A549 (cell line): ENCODE measurements at regions of chr14 and their contacts with region 1.

Region 1: GRCh38 chr14:68816262-68816942 is 23.5 kb upstream of the ZFP36L1 start:
- DNase-seq: peak; percentile 92 to 93
- ATAC-seq: peak; percentile 90 to 92
- H3K4me3 ChIP-seq: peak overlapping the region; percentile 45
- H3K27ac ChIP-seq: peak overlapping the region; percentile 97 to 100
- H3K4me1 ChIP-seq: peaks cover 47% of the 10 kb centered on the region
- CTCF ChIP-seq: peak; percentile 94
- EP300 ChIP-seq: 0 out of 5 replicates have a peak, but pooled peaks of 1 of the 2 experiments have one; percentile 1
- POLR2A ChIP-seq: peak; percentile 48
- RAD21 ChIP-seq: peak; percentile 98 to 99

Region 2: DNA sequence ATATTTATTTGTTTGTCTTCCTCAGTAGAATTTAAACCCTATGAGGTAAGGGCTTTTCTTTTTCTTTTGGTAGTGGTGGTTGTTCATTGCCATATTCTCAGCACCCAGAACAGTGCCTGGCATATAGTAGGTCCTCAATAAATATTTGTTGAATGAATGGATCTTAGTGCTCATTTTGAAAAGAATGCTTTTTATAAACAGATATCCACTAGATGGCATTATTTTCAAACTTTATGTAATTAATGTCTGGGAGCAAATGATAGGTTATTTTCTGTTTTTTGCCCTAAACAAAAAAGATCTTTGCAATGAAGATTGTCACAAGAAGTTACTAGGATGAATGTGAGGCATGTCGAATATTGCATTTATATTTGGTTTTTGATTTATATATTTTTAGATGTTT is 932.7 kb before region 1 on chr14:
- CTCF ChIA-PET with region 1: interaction called, 75 read pairs
- POLR2A ChIA-PET with region 1: no interaction called
- DNase-seq: peak; percentile 18
- ATAC-seq: no peak
- H3K4me3 ChIP-seq: no peak overlapping the region
- H3K27ac ChIP-seq: peak overlapping the region in 1 of 2 experiments; percentile 71; a peak in 2 of 6 replicates
- H3K4me1 ChIP-seq: peaks cover 12% of the 10 kb centered on the region; the same call in 1 of the 3 replicates
- CTCF ChIP-seq: peak; percentile 65
- EP300 ChIP-seq: no peak
- POLR2A ChIP-seq: no peak
- RAD21 ChIP-seq: peak; percentile 64 to 79

Region 3: DNA sequence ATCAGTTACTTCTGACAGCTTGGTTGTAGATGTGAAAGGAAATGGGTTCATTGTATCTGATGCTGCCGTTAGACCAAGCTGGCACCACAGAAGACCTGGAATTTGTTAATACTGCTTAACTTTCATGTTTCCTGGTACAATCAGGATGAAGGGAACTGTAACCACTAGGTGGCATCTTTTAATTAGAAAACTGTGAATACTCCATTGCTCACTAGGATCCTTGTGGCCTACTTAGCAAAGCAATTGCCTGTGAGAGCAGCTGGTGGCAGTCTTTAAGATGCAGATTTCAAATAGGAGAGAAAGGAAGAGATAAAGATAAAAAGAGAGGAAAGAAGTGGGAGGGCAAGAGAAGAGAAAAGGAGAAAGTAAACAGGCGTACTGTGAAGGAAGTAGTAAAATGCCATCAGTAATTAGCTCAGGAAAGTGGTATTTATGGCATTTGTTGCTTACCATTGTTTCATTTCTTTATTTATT is 882.4 kb before region 1 on chr14:
- CTCF ChIA-PET with region 1: interaction called, 51 read pairs
- POLR2A ChIA-PET with region 1: no interaction called
- DNase-seq: peak; percentile 82 to 89
- ATAC-seq: peak; percentile 99
- H3K4me3 ChIP-seq: no peak overlapping the region
- H3K27ac ChIP-seq: peak overlapping the region; percentile 73 to 78
- H3K4me1 ChIP-seq: peaks cover 13% of the 10 kb centered on the region
- CTCF ChIP-seq: peak; percentile 93
- EP300 ChIP-seq: no peak
- POLR2A ChIP-seq: no peak
- RAD21 ChIP-seq: peak; percentile 89 to 93

Region 4: GRCh38 chr14:68239988-68240771 is 576.2 kb before region 1 on chr14:
- CTCF ChIA-PET with region 1: interaction called, 162 read pairs
- POLR2A ChIA-PET with region 1: no interaction called
- DNase-seq: no peak
- ATAC-seq: no peak; a peak in 1 of 6 replicates
- H3K4me3 ChIP-seq: no peak overlapping the region
- H3K27ac ChIP-seq: peak overlapping the region; percentile 46 to 76
- H3K4me1 ChIP-seq: peaks cover 19% of the 10 kb centered on the region
- CTCF ChIP-seq: no peak
- EP300 ChIP-seq: no peak
- POLR2A ChIP-seq: no peak
- RAD21 ChIP-seq: no peak

Region 5: GRCh38 chr14:68685419-68686204 is 130.8 kb before region 1 on chr14:
- CTCF ChIA-PET with region 1: interaction called, 10 read pairs
- POLR2A ChIA-PET with region 1: no interaction called
- DNase-seq: no peak
- ATAC-seq: no peak
- H3K4me3 ChIP-seq: no peak overlapping the region
- H3K27ac ChIP-seq: peak overlapping the region; percentile 86 to 94
- H3K4me1 ChIP-seq: peaks cover 63% of the 10 kb centered on the region
- CTCF ChIP-seq: no peak
- EP300 ChIP-seq: no peak
- POLR2A ChIP-seq: no peak
- RAD21 ChIP-seq: no peak

Region 6: GRCh38 chr14:68734231-68734775 is 82.1 kb before region 1 on chr14:
- CTCF ChIA-PET with region 1: no interaction called
- POLR2A ChIA-PET with region 1: no interaction called
- DNase-seq: no peak
- ATAC-seq: no peak
- H3K4me3 ChIP-seq: no peak overlapping the region
- H3K27ac ChIP-seq: peak overlapping the region in 1 of 2 experiments; percentile 46; a peak in 2 of 6 replicates
- H3K4me1 ChIP-seq: no peaks in the 10 kb centered on the region
- CTCF ChIP-seq: no peak
- EP300 ChIP-seq: no peak
- POLR2A ChIP-seq: no peak
- RAD21 ChIP-seq: no peak

Region 7: DNA sequence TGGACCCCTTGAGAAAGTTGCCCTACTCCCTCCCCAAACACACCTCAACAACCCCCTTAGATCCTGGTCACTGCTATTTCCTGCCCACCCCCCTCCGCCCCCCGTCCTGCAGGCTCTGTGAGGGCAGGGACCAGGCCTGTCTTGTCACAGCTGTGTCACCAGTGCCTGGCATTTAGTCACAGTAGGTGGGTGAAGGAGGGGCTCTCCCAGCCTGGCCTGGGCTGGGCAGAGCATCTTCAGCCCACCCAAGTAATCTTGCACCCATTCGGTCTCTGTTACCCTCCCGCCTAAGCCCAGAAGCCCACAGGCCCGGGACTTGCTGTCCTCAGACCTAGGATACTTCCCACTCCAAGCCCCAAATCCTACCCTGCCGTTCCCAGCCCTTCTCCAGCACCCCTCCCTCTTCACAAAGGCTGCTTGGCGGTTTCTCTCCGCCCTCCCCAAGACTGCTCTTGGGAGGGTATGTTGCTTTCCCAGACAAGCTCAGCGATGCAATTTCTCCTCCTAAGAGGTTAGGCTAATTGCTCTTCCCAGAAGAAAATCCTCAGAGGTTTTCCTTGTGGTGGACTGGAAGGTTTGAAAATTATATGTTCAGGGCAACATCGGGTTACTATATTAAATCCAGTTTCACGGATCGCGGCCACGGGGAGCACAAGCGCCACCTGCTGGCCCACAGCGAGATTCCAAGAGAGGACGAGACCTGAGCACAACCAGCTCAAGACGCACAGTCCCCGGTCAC is 27.2 kb after region 1 on chr14:
- CTCF ChIA-PET with region 1: interaction called, 28 read pairs
- POLR2A ChIA-PET with region 1: no interaction called
- DNase-seq: peak; percentile 69 to 76
- ATAC-seq: peak; percentile 91 to 96
- H3K4me3 ChIP-seq: no peak overlapping the region; the same call in 2 of the 3 replicates
- H3K27ac ChIP-seq: peak overlapping the region; percentile 35 to 83
- H3K4me1 ChIP-seq: 0 out of 3 replicates have a peak, but pooled peaks cover 4% of the 10 kb centered on the region
- CTCF ChIP-seq: peak; percentile 96
- EP300 ChIP-seq: no peak
- POLR2A ChIP-seq: no peak
- RAD21 ChIP-seq: peak; percentile 83 to 87